ENCODE measurements at regions of chr3 and their contacts with region 1.

Region 1: GRCh38 chr3:123489400-123490004 is 40.6 kb upstream of the ADCY5 start:
- DNase-seq: peak; percentile 26
- H3K4me3 ChIP-seq: no peak overlapping the region
- H3K27ac ChIP-seq: no peak overlapping the region
- H3K27me3 ChIP-seq: peaks cover 5% of the 10 kb centered on the region
- CTCF ChIP-seq: peak; percentile 94

Region 2: DNA sequence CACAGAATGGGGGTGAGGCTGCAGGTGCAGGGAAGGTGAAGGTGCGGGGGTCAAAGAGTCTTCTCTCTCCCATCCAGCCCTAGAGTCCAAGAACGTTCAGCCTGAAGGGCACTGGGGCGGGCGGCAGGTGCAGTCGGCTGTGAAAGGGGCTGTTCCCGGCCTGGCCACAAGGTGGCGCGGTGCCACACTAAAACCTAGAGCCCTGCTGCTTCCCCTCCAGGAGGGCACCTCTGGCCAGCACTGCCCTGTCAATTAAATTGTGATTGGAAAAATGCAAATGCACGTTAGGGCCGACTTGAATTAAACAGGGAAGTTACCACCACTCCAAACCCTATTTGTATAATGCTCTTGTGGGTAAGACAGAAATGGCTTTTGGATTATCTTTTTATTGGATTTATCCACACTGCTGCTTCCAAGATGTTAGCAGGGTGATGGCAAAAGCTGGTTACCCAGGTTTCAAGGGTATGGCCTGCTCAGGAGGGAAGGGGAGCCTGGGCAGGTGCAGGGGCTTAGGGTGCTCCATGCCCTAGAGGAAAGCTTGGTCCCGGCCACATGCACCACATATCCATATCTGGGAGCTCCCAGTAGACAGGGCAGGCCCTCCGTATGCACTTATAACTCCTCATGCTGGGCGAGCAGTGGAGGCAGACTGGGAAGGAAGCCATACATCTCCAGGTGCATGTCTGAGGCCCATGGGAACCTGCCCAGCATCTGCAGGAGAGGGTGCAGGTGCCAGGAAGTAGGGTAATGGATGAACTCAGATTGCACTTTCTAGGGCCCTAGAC is 160.5 kb before region 1 on chr3:
- CTCF ChIA-PET with region 1: interaction called, 108 read pairs
- POLR2A ChIA-PET with region 1: no interaction called
- DNase-seq: no peak
- H3K4me3 ChIP-seq: no peak overlapping the region
- H3K27ac ChIP-seq: no peak overlapping the region
- H3K27me3 ChIP-seq: peaks cover 37% of the 10 kb centered on the region
- CTCF ChIP-seq: peak; percentile 87

Region 3: DNA sequence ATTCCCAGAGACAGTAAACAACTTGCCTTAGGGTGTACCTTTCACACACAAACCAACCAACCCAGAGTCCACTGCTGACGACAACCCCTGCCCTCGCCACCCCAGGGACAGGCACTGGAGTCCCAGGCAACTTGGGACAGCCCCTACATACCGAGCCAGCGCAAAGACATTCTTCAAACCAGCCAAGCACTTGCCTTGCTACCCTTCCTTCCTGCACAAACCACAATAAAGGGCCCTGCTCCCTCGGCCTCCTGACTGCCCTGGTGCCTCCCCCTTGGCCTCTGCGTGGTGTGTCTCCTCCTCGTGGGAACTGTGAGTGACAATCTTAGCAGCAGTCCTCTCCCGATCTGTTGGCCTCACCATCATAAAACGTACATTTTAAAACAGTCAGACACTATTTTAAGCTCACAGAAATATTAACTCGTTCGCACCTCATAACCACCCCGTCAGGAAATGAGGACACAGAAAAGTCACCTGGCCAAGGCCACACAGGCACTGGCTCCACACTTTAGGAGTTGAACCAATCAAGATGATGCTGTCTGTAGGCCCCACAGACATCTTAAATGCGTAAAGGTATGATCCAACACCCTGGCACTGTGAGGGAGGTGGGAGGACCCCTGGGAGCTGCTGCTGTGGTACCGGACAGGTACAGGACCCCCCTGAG is 154.4 kb before region 1 on chr3:
- CTCF ChIA-PET with region 1: interaction called, 108 read pairs
- POLR2A ChIA-PET with region 1: no interaction called
- DNase-seq: no peak
- H3K4me3 ChIP-seq: no peak overlapping the region
- H3K27ac ChIP-seq: no peak overlapping the region
- H3K27me3 ChIP-seq: peaks cover 35% of the 10 kb centered on the region
- CTCF ChIP-seq: no peak

Region 4: GRCh38 chr3:123469323-123469995 is 20.0 kb before region 1 on chr3:
- CTCF ChIA-PET with region 1: no interaction called
- POLR2A ChIA-PET with region 1: no interaction called
- DNase-seq: no peak
- H3K4me3 ChIP-seq: no peak overlapping the region
- H3K27ac ChIP-seq: no peak overlapping the region
- H3K27me3 ChIP-seq: peaks cover 44% of the 10 kb centered on the region
- CTCF ChIP-seq: no peak

Region 5: DNA sequence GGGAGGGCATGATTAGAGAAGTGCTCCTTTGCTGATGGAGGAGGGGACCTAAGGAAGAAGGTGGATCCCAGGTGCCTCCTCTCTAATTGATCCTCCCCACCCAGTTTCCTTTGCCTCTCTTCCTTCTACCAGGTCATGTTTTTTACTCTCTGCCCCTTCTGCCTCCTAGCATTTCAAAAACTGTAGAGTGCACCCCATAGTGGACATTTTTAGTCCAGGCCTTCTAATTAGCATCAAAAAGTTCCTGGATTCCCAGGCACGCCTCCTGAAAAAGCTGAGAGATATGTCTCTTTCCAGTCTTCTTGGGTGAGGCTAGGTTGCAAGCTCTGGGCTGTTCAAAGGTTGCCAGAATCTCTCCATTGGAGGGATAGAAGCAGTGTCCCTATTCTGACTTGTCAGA is 1416.3 kb after region 1 on chr3:
- CTCF ChIA-PET with region 1: no interaction called
- POLR2A ChIA-PET with region 1: no interaction called
- DNase-seq: no peak
- H3K4me3 ChIP-seq: no peak overlapping the region
- H3K27ac ChIP-seq: no peak overlapping the region
- H3K27me3 ChIP-seq: peaks cover 23% of the 10 kb centered on the region
- CTCF ChIP-seq: no peak; the same call in 1 of the 2 replicates